Sigmoid colon (tissue), 7 donors: ENCODE measurements at regions of chr5 and their contacts with region 1.

Region 1: DNA sequence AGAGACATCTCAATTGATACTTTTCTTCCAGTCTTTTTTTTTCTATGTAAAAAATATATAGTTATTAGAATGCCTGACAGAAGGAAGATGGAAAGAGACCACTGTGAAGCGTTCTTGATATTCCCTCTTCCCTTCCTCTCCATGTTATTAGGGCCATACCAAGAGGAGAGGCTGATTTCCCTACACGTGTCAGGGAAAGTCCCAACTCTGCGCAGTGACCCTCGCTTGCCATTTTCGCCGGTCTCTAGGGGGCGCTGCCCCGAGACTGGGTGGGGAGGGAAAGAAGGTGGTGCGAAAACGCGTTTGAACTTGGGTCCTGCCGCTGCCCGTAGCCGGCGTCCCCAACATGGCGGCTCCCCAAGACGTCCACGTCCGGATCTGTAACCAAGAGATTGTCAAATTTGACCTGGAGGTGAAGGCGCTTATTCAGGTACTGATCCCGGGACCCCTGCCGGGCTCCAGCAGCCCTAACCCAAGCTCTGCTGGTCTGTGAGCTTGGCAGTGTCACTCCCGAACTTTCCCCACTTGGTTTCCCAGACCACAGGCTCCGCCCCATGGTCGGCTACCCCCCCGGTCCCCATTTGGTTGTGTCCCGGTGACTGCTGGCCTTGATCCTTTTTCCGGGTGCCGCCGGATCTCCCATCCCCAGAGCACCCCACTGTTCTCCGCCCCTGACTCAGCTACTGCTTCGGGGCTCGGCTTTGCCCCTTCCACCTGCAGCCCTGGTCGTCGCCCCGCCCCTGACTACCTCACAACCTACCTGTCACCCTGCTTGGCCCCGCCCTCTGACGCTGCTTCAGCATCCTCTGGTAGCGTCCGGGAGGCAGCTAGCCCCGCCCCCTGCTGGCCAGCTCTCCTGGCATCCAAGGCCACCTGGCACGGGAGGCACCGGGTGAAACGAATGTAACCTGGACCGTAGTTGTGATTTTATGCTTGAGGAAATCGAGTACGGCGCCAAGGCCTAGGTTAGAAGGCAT is at the start of gene BNIP1:
- DNase-seq: peak; percentile 95
- H3K4me3 ChIP-seq: peak within 1 kb of the TSS; percentile 72 to 95 (median 92)
- H3K27ac ChIP-seq: peak within 1 kb of the TSS; percentile 84 to 90 (median 90)
- H3K4me1 ChIP-seq: peaks cover 0 to 16% (median 7%) of the 10 kb centered on the region in 4 donors
- H3K27me3 ChIP-seq: no peaks in the 10 kb centered on the region
- CTCF ChIP-seq: peak; percentile 84 to 96 (median 92)
- EP300 ChIP-seq: no peak
- POLR2A ChIP-seq: peak; percentile 28 to 33
- total RNA-seq, gene BNIP1: 6.7 to 11.8 (median 10.5) TPM

Region 2: GRCh38 chr5:172714491-172715421 is 429.7 kb before region 1 on chr5:
- intact Hi-C with region 1: loop called (anchors 10 kb)
- DNase-seq: peak; percentile 92
- H3K4me3 ChIP-seq: no peak overlapping the region
- H3K27ac ChIP-seq: peak overlapping the region; percentile 52 to 77 (median 64)
- H3K4me1 ChIP-seq: peaks cover 0 to 40% (median 20%) of the 10 kb centered on the region in 4 donors
- H3K27me3 ChIP-seq: peaks cover 0 to 5% (median 0%) of the 10 kb centered on the region in 3 donors
- CTCF ChIP-seq: peak; percentile 59 to 85 (median 84)
- EP300 ChIP-seq: peak in 2 of 4 donors; percentile 72 to 74
- POLR2A ChIP-seq: no peak

Region 3: DNA sequence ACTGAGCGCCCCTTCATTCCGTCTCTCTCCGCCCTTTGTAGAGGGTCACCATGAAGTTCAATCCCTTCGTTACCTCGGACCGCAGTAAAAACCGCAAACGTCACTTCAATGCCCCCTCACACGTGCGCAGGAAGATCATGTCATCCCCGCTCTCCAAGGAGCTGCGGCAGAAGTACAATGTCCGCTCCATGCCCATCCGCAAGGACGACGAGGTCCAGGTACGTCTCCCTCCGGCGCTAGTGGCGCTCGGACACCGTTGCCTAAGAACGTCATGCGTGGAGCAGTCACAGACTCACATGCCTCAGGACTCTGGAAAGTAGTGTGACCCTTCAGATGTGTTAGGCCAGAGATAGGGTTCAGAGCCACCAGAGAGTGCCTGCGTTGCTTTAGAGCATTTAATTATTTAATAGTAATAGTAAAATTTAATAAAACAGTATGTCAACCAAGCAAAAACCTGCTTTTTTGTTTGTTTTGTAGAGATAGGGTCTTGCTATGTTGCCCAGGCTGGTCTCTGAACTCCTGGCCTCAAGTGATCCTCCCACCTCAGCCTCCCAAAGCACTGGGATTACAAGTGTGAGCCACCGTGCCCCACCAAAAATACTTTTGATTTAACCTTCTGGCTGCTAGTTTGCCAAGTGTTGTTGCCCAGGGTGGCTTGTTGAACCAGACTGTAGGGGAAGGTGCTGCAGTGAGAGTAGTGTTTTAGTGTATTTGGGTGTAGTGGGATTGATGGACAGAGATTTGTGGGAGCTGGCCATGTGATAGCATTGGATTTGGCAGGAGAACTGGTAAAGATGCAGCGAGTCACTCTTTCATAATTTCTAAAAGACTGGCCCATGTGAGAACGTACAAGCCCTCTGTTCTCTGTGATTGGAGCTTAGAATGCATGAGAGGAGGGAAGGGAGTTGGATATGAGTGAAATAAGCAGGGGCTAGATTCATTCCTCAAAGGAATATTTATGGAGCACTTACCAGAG is 184.4 kb before region 1 on chr5:
- intact Hi-C with region 1: loop called (anchors 5 kb)
- DNase-seq: no peak
- H3K4me3 ChIP-seq: peak overlapping the region; percentile 60 to 97 (median 84)
- H3K27ac ChIP-seq: peak overlapping the region; percentile 81 to 90 (median 88)
- H3K4me1 ChIP-seq: peaks cover 0 to 31% (median 21%) of the 10 kb centered on the region in 4 donors
- H3K27me3 ChIP-seq: no peaks in the 10 kb centered on the region
- CTCF ChIP-seq: no peak
- EP300 ChIP-seq: no peak
- POLR2A ChIP-seq: no peak

Region 4: DNA sequence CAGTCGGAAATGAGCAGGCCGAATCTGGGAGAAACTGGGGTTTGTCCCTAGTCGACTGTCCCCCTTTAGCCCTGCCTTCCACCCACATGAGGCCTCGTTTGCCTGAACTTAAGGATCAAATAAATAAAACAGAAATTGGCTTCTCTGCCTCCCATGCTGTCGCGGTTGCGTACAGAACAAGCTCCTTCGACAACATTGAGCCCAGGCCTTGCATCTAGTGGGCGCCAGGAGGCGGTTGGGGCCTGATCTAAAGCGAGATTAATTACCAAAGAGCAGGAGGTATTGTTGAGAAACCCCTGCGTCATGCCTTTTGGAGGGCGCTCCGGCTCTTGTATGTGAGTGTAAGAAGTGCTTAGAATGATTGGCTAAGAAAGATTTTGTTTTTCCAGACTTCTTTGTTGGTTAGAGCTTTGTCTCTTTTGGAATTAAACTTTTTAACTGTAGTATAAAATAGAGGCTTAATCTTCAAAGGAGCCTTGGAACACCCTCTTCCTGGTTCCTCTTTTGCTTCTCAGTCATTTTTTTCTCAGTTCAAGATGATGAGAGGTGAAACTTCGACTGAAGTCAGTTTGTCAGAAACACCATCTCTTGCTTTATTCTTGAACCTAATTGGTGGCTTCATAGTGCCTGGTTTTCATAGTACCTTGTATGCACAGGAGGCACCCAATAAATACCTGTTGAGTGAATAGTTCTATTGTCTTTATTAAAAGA is 160.1 kb before region 1 on chr5:
- intact Hi-C with region 1: loop called (anchors 2 kb)
- DNase-seq: peak; percentile 93
- H3K4me3 ChIP-seq: peak overlapping the region; percentile 78 to 97 (median 88)
- H3K27ac ChIP-seq: peak overlapping the region; percentile 93 to 97 (median 96)
- H3K4me1 ChIP-seq: peaks cover 0 to 29% (median 18%) of the 10 kb centered on the region in 4 donors
- H3K27me3 ChIP-seq: no peaks in the 10 kb centered on the region
- CTCF ChIP-seq: peak in 1 of 4 experiments; percentile 43
- EP300 ChIP-seq: no peak
- POLR2A ChIP-seq: no peak

Region 5: DNA sequence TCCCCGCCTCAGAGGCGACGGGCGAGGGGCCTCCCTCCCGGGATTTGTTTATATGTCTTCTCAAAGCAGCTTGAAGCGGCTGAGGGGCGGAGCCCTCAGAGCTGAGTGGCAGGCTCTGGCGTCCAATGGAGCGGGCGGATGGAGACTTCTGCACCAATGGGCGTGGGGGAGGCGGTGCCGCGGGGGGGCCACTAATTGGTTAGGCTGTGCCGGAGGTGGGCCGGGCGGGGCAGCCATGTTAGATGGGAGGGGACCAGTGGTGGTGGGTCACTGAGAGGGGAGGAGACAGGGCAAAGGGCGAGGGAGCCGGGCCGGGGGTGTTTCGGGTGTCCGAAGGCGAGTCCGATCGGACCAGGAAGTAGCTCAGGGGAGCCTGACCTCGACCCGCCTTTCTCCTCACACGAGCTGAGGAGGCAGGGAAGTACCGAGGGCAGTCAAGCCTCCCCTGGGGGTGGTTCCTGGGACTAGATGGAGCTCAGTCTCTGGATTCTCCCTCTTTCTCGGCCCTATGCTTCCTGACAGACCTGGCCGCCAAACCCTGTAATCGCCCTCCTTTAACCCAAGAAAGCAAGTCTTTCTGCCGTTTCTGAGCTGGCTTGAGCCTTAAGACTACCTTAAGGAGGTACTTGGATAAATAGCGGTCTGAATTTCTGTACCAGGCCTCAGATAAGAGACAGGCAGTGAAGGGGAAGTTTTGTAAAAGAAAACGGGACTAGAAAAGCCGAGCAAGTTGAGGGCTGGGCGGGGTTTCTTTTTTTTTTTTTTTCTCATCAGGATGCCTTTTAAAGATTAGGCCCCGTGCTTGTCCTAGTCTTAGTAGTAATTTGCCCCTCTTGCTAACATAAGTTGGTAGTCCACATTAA is 87.2 kb before region 1 on chr5:
- intact Hi-C with region 1: loop called (anchors 5 kb)
- DNase-seq: peak; percentile 99
- H3K4me3 ChIP-seq: peak overlapping the region; percentile 77 to 100 (median 100)
- H3K27ac ChIP-seq: peak overlapping the region; percentile 97 to 100 (median 99)
- H3K4me1 ChIP-seq: peaks cover 0 to 59% (median 53%) of the 10 kb centered on the region in 4 donors
- H3K27me3 ChIP-seq: no peaks in the 10 kb centered on the region
- CTCF ChIP-seq: peak in 2 of 4 experiments; percentile 30
- EP300 ChIP-seq: no peak
- POLR2A ChIP-seq: no peak

Region 6: GRCh38 chr5:173283318-173284288 is 139.1 kb after region 1 on chr5:
- intact Hi-C with region 1: loop called (anchors 10 kb)
- DNase-seq: peak; percentile 72
- H3K4me3 ChIP-seq: peak overlapping the region in 2 of 4 donors; percentile 18 to 29
- H3K27ac ChIP-seq: no peak overlapping the region
- H3K4me1 ChIP-seq: peaks cover 0 to 11% (median 8%) of the 10 kb centered on the region in 4 donors
- H3K27me3 ChIP-seq: peaks cover 0 to 43% (median 5%) of the 10 kb centered on the region in 3 donors
- CTCF ChIP-seq: peak; percentile 39 to 71 (median 54)
- EP300 ChIP-seq: no peak
- POLR2A ChIP-seq: no peak

Region 7: DNA sequence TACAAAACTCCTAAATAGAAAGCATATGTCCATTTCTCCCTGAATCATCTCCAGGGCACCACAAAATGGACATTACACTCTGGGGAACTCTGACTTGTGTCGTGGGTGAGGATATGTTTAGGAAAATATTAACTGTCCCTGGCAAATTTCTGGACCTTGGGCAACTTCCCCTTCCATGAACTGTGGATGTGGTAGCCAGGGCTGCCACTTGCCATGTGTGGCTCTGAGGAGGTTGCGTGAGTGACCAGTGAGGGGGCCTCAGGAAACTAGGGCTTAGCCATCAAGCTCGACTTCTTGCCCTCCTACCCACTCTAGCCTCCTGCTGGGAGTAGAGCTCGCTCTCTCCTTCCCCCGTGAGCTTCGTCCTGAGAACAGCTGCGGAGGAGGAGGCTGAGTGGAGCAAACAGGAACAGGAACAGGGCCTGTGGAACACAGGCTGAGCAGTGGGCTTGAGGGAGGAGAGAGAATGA is 197.5 kb after region 1 on chr5:
- intact Hi-C with region 1: no loop called
- DNase-seq: no peak
- H3K4me3 ChIP-seq: no peak overlapping the region
- H3K27ac ChIP-seq: no peak overlapping the region
- H3K4me1 ChIP-seq: no peaks in the 10 kb centered on the region
- H3K27me3 ChIP-seq: no peaks in the 10 kb centered on the region
- CTCF ChIP-seq: no peak
- EP300 ChIP-seq: no peak
- POLR2A ChIP-seq: no peak

Region 8: DNA sequence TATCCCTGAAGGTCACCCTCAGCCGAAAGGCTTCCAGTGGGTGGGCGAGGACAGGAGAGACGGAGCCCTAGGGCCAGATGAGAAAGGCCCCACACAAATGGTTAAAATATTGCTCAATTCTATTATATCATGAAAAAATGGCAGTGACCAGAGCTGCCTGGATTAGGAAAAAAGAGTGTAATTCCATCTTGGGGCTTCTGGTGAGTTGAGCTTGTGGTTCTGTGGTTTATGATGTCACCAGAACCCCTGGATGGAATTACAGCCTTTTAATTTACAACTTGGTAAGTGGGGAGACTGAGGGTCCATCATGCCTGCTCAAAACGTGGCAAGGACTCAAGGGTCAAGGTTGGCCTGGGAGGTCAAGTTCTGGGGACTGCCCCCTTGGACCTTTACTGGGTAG is 239.2 kb after region 1 on chr5:
- intact Hi-C with region 1: no loop called
- DNase-seq: no peak
- H3K4me3 ChIP-seq: no peak overlapping the region
- H3K27ac ChIP-seq: no peak overlapping the region
- H3K4me1 ChIP-seq: no peaks in the 10 kb centered on the region
- H3K27me3 ChIP-seq: no peaks in the 10 kb centered on the region
- CTCF ChIP-seq: no peak
- EP300 ChIP-seq: no peak
- POLR2A ChIP-seq: no peak

Region 9: DNA sequence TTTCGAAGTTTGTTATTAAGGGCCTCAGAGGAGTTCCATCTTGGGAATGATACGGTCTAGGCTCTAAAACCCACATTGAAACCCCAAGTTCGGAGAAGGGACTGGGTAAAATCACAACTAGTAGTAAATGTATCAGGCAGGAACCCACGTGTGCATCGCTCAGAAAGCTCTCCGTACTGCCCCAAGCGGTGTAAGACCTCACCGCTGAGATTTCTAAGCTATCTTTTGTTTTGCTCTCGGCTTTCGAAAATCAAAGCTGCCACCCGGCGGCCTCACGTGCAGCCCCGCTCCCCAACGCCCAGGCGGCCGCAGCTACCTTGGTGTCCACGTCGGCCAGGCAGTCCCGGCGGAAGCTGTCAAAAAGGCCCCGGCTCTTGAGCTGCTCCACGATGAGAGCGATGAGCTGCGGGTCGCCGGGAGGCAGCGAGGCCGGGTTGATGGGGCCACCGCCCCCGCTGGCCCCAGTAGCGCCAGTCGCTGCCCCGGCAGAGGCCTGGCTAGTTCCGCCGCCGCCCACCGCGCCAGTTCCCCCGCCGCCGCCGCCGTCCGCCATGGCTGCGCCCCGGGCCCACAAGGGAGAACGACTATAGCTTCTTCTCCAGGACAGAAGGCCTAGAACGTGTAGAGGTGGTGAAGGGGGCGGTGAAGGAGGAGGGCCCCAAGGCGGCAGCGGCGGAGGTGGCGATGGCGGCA is 471.5 kb after region 1 on chr5:
- intact Hi-C with region 1: no loop called
- DNase-seq: peak; percentile 80
- H3K4me3 ChIP-seq: peak overlapping the region; percentile 57 to 97 (median 97)
- H3K27ac ChIP-seq: peak overlapping the region; percentile 94 to 97 (median 96)
- H3K4me1 ChIP-seq: peaks cover 0 to 33% (median 29%) of the 10 kb centered on the region in 4 donors
- H3K27me3 ChIP-seq: no peaks in the 10 kb centered on the region
- CTCF ChIP-seq: peak; percentile 36 to 64 (median 62)
- EP300 ChIP-seq: no peak
- POLR2A ChIP-seq: no peak